OCI-LY7 (cell line): ENCODE measurements at regions of chr1 and their contacts with region 1.

Region 1: DNA sequence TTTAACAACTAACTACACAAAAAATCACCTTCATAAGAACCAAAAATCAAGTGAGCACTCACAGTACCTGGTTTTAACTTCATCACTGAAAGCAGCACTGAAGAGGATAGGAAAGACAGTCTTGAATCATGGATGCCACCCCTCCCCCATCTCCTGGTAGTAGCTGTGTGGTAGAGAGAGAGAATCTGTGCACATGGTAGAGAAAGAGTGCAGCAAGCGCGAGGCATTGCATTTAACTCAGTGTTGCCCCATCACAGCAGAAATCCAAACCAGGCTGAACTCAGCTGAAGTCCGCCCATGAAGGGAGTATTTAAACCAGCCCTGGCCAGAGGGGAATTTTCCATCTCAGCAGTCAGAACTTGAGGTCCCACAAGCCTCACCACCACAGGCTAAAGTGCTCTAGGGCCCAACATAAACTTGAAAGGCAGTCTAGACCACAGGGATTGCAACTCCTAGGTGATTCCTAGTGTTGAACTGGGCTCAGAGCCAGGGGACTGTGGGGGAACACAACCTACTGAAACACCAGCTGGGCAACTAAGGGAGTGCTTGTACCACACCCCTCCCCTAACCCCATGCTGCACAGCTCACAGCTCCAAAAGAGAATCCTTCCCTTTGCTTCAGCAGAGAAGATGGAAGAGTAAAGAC is 38.4 kb downstream of the VAV3 start:
- DNase-seq: no peak
- H3K4me3 ChIP-seq: no peak overlapping the region
- H3K27ac ChIP-seq: no peak overlapping the region
- H3K4me1 ChIP-seq: no peaks in the 10 kb centered on the region
- CTCF ChIP-seq: no peak

Region 2: GRCh38 chr1:107883562-107883961 is 43.0 kb before region 1 on chr1:
- CTCF ChIA-PET with region 1: no interaction called
- POLR2A ChIA-PET with region 1: no interaction called
- intact Hi-C with region 1: no loop called
- DNase-seq: no peak
- H3K4me3 ChIP-seq: no peak overlapping the region
- H3K27ac ChIP-seq: no peak overlapping the region
- H3K4me1 ChIP-seq: no peaks in the 10 kb centered on the region
- CTCF ChIP-seq: no peak

Region 3: DNA sequence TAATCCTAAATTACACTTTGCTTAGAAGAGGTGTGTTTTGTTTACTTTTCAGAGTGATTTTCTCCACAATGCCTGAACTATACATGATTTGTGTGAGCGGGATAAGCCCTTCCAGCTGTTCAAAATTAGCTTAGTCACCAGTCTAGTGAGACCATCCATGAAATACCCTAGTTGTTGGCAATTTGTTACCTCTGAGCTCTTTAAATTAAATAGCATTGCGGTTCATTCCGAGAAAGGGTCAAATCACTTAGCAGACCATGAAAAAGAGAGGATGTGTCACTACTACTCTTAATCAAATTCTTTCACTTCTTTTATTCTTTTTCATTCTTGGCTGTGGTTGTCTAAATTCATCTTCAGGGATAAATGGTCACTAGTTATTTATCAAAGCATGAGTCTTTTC is 50.3 kb after region 1 on chr1:
- CTCF ChIA-PET with region 1: no interaction called
- POLR2A ChIA-PET with region 1: no interaction called
- intact Hi-C with region 1: loop called (anchors 5 kb)
- DNase-seq: no peak
- H3K4me3 ChIP-seq: no peak overlapping the region
- H3K27ac ChIP-seq: no peak overlapping the region
- H3K4me1 ChIP-seq: no peaks in the 10 kb centered on the region
- CTCF ChIP-seq: no peak